ENCODE measurements at regions of chr6 and their contacts with region 1.

Region 1: GRCh38 chr6:149431905-149432775 is 32.1 kb downstream of the SUMO4 start:
- DNase-seq: no peak
- H3K4me3 ChIP-seq: no peak overlapping the region
- CTCF ChIP-seq: peak; percentile 93

Region 2: DNA sequence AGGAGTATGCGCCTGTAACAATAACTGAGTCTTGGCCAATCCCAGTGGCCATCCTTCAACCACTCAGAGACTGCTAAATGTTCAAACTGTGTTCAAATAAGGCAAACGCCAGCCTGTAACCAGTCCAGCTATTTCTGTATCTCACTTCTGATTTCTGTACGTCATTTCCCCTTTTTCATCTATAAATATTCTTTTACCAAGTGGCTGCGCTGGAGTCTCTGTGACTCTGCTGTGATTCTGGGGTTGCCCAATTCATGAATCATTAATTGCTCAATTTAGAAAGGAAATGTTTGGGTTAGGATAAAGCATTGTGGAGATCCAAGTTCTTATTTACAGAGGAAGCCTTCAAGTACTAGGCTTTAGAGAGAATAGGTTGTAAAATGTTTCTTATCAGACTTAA is 775.1 kb before region 1 on chr6:
- CTCF ChIA-PET with region 1: no interaction called
- POLR2A ChIA-PET with region 1: no interaction called
- DNase-seq: peak; percentile 14
- H3K4me3 ChIP-seq: no peak overlapping the region
- CTCF ChIP-seq: no peak

Region 3: DNA sequence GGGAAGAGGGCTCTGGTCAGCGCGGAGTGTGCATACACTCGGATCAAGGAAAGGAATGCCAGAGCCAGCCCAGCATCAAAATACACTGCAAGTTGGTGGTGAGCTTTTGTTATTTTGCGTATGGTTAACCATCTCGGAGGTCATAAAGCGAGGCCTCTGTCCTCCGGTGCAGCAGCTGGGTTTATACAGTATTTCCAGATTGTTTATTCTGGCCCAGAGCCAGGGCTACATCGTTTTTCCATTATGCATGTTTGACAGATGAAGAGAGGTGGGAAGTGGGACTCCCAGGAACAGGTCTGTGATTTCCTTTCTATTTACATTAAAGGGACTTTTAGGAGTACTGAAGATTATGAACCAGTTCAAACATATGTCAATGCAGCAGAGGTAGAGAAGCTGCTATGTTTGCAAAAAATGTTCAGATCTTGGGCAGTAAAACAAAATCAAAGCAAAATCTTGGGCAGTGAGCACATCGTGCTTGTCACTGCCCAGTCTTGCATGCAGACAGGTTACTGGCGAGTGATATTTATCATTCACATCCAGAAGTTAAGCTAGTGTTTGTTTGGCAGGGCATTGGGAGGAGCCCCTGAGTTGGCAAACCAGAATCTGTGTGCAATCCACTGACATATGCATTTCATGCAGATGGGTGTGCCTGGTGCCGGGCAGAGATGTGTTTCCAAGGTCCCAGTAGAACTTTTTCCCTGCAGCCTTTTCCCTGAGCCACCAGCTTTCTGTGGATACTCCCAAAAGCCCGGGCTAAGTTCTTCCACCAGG is 371.0 kb before region 1 on chr6:
- CTCF ChIA-PET with region 1: interaction called, 11 read pairs
- POLR2A ChIA-PET with region 1: no interaction called
- DNase-seq: no peak
- H3K4me3 ChIP-seq: no peak overlapping the region
- CTCF ChIP-seq: no peak

Region 4: DNA sequence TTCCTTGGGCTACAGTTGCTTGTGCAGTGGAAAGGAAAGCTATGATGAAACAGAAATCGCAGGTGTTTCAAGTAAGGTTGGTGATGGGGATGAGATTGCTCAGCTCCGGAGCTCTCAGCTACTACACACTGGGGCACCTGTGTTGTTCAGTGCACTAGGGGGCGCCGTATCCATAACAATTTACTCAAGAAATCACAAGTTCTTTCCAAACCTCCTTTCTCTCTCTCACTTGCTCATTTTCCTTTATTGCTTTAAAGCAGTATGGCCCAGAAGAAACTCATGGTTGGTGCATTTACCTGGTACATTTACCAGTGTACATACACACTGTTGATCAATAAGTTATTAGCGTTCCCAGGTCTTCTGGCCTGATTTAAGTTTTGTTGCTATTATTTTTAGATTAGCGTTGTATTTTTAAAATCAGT is 349.8 kb before region 1 on chr6:
- CTCF ChIA-PET with region 1: interaction called, 32 read pairs
- POLR2A ChIA-PET with region 1: no interaction called
- DNase-seq: no peak
- H3K4me3 ChIP-seq: no peak overlapping the region
- CTCF ChIP-seq: peak; percentile 77

Region 5: DNA sequence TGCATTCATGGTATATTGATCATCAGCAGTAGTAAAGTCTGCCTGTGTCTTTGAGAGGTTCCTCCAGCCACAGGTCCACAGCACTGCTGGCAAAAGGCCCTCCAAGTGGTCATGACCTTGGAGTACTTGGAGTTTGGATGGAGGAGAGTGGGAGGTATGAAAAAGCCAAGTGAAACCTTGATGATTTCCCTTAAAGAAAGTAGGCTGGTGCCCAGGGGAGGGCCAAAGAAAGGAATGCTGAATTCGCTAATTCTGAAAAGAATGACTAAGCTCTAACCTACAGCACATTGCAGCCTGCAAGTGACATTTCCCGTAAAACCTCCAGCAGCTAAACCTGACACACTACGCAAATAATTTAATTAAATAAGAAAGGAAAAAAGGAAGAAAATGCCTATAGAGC is 338.0 kb before region 1 on chr6:
- CTCF ChIA-PET with region 1: interaction called, 18 read pairs
- POLR2A ChIA-PET with region 1: no interaction called
- DNase-seq: no peak
- H3K4me3 ChIP-seq: no peak overlapping the region
- CTCF ChIP-seq: no peak

Region 6: DNA sequence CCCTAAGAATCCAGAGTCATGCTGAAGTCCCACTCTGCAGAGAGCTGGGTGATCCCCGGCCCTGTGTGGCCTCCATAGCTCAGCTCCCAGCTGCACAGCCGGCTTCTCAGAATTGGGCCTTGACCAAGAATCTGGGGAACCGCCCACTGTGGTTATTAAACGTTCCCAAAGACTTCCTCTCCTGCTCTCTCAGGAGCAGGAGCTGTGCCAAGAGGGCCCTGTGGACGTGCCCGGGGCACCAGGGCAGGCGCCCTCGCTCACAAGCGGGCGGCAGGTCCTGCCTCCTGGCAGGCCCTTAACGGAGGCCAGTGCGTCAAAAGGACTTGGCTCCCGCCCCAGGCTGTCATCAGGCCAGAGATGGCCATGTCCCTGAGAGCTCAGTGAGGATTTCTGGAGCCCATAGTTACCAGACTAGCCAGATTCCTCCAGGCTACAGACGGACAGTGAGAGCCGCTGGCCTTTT is 22.3 kb after region 1 on chr6:
- CTCF ChIA-PET with region 1: interaction called, 61 read pairs
- POLR2A ChIA-PET with region 1: no interaction called
- DNase-seq: peak; percentile 57
- H3K4me3 ChIP-seq: no peak overlapping the region
- CTCF ChIP-seq: no peak